PC-9 (cell line): ENCODE measurements at regions of chrX and their contacts with region 1.

Region 1: GRCh38 chrX:115226929-115227328 is 7.0 kb downstream of the LRCH2 start:
- DNase-seq: peak; percentile 27 to 63
- H3K4me3 ChIP-seq: no peak overlapping the region
- H3K27ac ChIP-seq: no peak overlapping the region
- H3K4me1 ChIP-seq: peaks cover 16% of the 10 kb centered on the region
- H3K27me3 ChIP-seq: no peaks in the 10 kb centered on the region
- CTCF ChIP-seq: peak; percentile 80

Region 2: DNA sequence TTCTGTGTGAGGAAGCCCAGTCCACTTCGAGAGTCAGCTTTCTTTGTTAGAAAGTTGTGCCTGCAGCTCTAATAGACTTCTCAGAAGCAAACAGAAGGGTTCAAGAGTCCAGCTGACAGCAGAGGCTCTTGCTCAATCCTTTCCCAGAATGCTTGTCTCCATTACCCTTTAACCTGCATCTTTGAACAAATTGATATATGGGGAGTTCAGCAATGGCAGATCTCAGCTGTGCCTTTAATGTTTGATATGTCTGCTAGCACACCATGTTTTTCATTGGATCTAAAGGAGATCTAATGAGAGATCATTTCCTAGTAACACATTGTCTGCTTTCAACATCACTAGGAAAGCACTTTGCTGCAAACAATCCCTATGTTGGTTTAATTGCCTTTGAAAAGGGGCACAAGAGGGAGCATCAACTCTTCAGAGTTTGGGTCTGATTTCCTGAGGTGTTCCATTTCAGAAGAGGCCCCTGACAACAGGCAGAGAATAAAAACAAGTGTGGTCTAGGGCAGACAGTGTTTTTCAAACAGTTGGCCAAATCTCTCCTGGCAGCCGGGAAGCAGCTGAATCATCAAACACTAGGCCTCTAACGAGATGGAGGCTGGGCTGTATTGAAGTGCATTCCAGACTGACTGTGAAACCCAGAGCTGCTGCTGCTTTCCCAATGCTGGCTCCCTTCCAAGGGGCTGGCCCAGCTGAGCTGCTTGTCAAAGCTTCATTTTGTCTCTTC is 118.1 kb after region 1 on chrX:
- CTCF ChIA-PET with region 1: no interaction called
- POLR2A ChIA-PET with region 1: no interaction called
- intact Hi-C with region 1: no loop called
- DNase-seq: peak; percentile 87 to 91
- H3K4me3 ChIP-seq: 0 out of 2 replicates have a peak overlapping the region, but pooled peaks have one; percentile 21
- H3K27ac ChIP-seq: peak overlapping the region; percentile 75
- H3K4me1 ChIP-seq: peaks cover 17% of the 10 kb centered on the region
- H3K27me3 ChIP-seq: no peaks in the 10 kb centered on the region
- CTCF ChIP-seq: no peak

Region 3: DNA sequence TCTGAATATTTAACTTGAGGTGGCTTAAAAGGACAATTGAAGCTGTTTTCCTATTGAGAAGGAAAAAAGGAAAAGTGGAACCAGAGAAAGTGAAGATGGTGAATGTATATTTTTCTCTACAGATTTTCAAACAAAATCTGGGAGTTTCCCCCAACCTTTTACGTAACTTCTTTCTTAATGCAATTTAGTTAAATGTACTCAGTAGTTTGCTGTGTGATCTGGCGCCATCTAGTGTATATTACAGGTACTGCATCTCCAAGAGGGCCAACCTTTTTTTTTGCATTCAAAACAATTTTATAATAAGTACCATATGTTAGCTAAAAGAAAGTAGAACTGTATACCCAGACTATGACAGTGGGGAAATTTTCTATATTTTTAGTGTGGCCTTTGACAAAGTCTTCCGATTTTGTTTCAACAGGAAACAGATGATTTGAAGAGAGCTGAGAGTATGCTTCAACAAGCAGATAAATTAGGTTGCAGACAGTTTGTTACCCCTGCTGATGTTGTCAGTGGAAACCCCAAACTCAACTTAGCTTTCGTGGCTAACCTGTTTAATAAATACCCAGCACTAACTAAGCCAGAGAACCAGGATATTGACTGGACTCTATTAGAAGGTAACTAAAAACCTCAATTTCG is 416.1 kb after region 1 on chrX:
- CTCF ChIA-PET with region 1: no interaction called
- POLR2A ChIA-PET with region 1: no interaction called
- intact Hi-C with region 1: loop called (anchors 1 kb)
- DNase-seq: peak; percentile 41 to 44
- H3K4me3 ChIP-seq: no peak overlapping the region
- H3K27ac ChIP-seq: peak overlapping the region; percentile 20; the same call in 1 of the 2 replicates
- H3K4me1 ChIP-seq: no peaks in the 10 kb centered on the region
- H3K27me3 ChIP-seq: no peaks in the 10 kb centered on the region
- CTCF ChIP-seq: peak; percentile 99

Region 4: GRCh38 chrX:115679460-115679859 is 452.5 kb after region 1 on chrX:
- CTCF ChIA-PET with region 1: no interaction called
- POLR2A ChIA-PET with region 1: no interaction called
- intact Hi-C with region 1: loop called (anchors 1 kb)
- DNase-seq: no peak
- H3K4me3 ChIP-seq: no peak overlapping the region
- H3K27ac ChIP-seq: no peak overlapping the region
- H3K4me1 ChIP-seq: no peaks in the 10 kb centered on the region
- H3K27me3 ChIP-seq: no peaks in the 10 kb centered on the region
- CTCF ChIP-seq: peak; percentile 61

Region 5: DNA sequence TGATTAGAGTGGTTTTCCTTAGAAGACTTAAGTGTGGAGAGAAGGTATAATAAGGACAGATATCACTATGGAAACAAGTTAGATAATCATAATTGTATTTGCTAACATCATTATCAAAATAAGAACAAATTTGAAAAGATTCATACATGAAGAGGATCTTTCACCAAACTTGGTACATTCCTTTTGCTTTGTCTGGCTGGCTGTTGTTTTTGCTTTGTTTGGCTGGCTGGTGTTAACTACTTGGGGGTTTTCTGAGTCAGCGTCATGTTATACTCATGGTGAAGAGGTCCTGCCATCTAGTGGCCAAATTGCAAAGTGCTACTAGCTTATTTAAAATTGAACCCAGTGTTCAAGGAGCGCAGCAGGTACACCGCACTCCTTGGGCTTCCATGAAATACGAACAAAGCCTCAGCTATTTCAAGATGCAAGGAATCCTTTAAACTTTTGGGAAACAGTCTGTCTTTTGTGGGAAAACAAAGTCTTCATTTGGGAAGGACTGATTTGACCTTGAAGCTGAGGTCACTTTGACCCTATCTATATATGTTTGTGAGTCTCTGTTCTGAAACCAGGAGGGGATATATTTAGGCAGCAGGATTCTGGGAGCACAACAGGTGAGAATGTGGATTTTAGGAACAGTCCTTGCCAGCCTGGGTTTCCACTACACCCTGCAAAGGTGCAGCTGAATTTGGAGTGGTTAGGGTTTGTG is 463.7 kb after region 1 on chrX:
- CTCF ChIA-PET with region 1: no interaction called
- POLR2A ChIA-PET with region 1: no interaction called
- intact Hi-C with region 1: loop called (anchors 1 kb)
- DNase-seq: peak; percentile 55 to 65
- H3K4me3 ChIP-seq: no peak overlapping the region
- H3K27ac ChIP-seq: no peak overlapping the region
- H3K4me1 ChIP-seq: peaks cover 4% of the 10 kb centered on the region; the same call in 1 of the 2 replicates
- H3K27me3 ChIP-seq: no peaks in the 10 kb centered on the region
- CTCF ChIP-seq: peak; percentile 92